Sigmoid colon (tissue), 7 donors: ENCODE measurements at regions of chr2 and their contacts with region 1.

Region 1: GRCh38 chr2:236679884-236680860 is 110.5 kb downstream of the ACKR3 start:
- DNase-seq: no peak
- H3K4me3 ChIP-seq: no peak overlapping the region
- H3K27ac ChIP-seq: peak overlapping the region in 1 of 4 donors; percentile 9
- H3K4me1 ChIP-seq: peaks cover 0 to 24% (median 20%) of the 10 kb centered on the region in 4 donors
- H3K27me3 ChIP-seq: no peaks in the 10 kb centered on the region
- CTCF ChIP-seq: no peak
- EP300 ChIP-seq: peak in 2 of 4 donors; percentile 35 to 44
- POLR2A ChIP-seq: no peak

Region 2: GRCh38 chr2:236715491-236715961 is 35.4 kb after region 1 on chr2:
- intact Hi-C with region 1: loop called (anchors 5 kb)
- DNase-seq: no peak
- H3K4me3 ChIP-seq: no peak overlapping the region
- H3K27ac ChIP-seq: no peak overlapping the region
- H3K4me1 ChIP-seq: peaks cover 0 to 25% (median 16%) of the 10 kb centered on the region in 4 donors
- H3K27me3 ChIP-seq: no peaks in the 10 kb centered on the region
- CTCF ChIP-seq: no peak
- EP300 ChIP-seq: no peak
- POLR2A ChIP-seq: no peak